Activated CD4-positive, alpha-beta memory T cell treated with anti-CD3 and anti-CD28 coated beads for 36 hours (primary cell): ENCODE measurements at regions of chr12 and their contacts with region 1.

Region 1: DNA sequence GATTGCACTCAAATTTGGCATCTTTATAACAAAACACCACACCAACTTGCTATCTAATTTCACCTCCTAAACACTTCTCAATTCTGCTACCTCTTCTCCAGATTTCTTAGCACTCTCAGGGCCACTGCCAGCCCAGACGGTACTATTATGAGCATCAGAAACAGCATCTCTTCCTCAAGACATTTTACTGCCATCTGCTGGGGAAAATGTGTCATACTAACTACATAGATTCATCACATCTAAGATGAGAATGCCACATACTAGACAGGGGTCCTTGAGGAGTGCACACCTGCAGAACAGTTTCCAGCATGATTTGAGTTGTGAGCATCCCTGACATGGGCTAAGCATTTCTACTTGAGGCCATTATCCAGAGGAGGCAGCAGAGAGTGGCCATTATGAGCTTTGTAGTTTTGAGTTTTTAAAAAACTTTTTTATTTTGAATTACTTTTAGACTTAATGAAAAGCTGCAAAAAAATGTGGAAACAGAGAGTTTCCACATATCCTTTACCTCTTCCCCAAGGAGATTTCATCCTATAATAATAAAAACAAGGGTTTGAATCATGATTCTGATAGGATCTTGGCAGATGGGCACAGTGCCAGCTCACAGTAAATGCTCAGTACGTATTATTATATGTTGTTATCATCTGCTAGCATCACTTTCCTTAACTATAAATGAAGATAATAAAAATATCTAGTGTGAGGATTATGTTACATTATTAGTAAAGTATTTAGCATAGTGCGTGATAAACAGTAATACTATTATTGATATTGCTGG is 15.2 kb upstream of the GRIP1 start:
- DNase-seq: peak; percentile 17
- H3K4me3 Mint-ChIP-seq: no peak overlapping the region
- H3K27ac Mint-ChIP-seq: no peak overlapping the region
- H3K4me1 Mint-ChIP-seq: peaks cover 4% of the 10 kb centered on the region
- H3K27me3 Mint-ChIP-seq: peaks cover 5% of the 10 kb centered on the region

Region 2: DNA sequence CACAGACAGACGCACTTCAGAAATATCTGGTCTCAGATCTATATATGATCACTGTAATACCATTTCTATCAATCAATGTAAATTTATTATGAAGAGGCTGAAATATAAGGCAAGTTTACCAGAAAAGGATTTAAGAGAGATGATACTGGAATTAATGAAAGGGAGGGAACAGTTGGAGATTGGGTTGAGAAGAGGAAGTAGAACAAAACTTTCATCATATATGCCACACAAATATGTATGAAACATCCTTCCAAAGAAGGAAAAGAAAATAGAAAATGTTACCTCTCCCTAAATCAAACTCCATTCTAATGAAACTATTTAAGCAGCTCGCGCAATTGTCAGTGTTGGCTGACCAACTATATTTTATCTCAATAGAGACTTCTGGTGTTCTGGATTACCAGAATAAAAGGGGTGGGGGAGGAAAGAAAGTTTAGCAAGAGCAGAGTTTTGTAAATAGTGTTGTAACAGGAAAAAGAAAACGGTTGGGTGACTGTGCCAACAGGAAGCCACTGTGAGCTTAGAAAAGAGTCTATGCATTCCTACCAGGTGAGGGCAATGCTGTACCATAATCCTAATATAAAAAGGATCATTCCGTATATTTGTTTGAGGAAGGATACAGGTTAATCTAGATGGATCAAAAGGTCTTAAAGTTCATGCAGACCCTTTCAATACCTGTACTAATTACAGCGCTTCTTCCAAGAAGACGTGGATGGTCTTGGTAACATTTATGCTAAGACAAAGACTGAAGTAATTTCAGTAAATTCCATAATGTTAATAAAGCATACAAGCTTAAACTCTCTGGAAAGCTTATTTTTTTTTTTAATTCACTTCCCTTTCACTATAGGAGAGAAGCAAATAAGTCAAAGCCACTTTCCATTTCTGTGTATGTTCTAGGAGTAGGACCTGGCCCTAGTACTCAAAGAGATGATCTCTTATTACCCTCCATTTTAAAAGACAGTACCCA is 549.0 kb before region 1 on chr12:
- CTCF ChIA-PET with region 1: interaction called, 3 read pairs
- POLR2A ChIA-PET with region 1: no interaction called
- intact Hi-C with region 1: loop called (anchors 10 kb)
- DNase-seq: no peak
- H3K4me3 Mint-ChIP-seq: no peak overlapping the region
- H3K27ac Mint-ChIP-seq: peak overlapping the region; percentile 49
- H3K4me1 Mint-ChIP-seq: peaks cover 9% of the 10 kb centered on the region
- H3K27me3 Mint-ChIP-seq: no peaks in the 10 kb centered on the region

Region 3: GRCh38 chr12:66269757-66270383 is 424.2 kb before region 1 on chr12:
- CTCF ChIA-PET with region 1: interaction called, 22 read pairs
- POLR2A ChIA-PET with region 1: no interaction called
- intact Hi-C with region 1: loop called (anchors 1 kb)
- DNase-seq: peak; percentile 30
- H3K4me3 Mint-ChIP-seq: no peak overlapping the region
- H3K27ac Mint-ChIP-seq: no peak overlapping the region
- H3K4me1 Mint-ChIP-seq: peaks cover 4% of the 10 kb centered on the region
- H3K27me3 Mint-ChIP-seq: no peaks in the 10 kb centered on the region

Region 4: DNA sequence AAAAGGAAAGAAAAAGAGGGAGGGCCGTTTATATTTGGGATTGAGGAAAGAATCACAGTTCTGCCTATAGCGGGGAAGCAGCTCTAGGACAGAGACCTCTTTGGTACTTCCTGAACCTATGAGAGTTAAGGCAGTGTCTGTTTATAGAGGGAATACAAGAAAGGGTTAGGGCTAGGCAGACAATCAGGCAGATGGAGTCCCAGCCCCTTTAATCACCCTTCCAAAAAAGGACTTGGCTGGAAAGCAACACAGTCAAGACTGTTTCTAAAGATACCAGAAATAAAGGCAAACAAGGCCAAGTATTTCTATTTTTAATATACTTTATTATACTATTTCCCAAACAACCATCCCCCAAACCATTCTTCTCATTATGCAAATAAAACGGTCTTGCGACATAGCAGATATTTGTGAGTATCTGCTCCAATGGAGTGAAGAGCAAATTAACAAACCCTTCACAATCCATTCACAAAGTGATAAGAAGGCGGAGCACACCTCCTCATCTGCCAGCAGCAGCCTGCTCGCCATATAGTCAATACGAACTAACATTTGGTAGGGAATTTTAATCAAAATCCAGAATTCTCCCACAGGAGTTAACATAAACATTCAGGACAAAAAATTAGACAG is 14.5 kb before region 1 on chr12:
- CTCF ChIA-PET with region 1: interaction called, 31 read pairs
- POLR2A ChIA-PET with region 1: no interaction called
- intact Hi-C with region 1: no loop called
- DNase-seq: no peak
- H3K4me3 Mint-ChIP-seq: no peak overlapping the region
- H3K27ac Mint-ChIP-seq: no peak overlapping the region
- H3K4me1 Mint-ChIP-seq: no peaks in the 10 kb centered on the region
- H3K27me3 Mint-ChIP-seq: peaks cover 7% of the 10 kb centered on the region

Region 5: DNA sequence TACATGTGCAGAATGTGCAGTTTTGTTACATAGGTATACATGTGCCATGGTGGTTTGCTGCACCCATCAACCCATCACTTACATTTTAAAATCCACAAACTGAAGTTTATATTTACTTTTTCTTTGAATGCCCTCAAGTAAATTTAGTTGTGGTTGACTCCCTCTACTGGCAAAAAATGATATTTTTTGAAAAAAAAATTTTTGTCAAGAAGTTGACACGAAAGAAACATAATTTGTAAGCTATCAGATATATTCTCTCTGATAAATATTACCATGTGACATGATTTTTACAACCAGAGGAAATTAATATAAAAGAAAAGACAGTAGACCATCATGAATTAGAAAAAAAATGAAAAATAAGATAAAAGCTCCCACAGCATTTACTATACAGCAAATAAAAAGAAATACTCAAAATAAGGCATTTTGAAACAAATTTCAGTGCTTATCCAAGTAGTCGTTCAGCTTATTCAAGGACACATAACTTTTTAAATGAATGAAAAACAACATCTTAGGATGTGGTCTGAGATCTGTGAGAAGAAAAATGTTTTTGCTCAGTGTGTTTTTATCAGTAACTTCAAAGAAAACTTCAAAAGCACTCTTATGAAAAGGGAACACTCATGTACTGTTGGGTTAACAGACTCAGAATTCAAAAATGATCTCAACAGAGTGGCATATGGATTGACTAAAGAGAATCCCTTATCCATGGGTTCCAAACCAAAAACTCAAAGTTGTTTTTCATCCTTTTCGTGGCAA is 14.8 kb after region 1 on chr12:
- CTCF ChIA-PET with region 1: interaction called, 14 read pairs
- POLR2A ChIA-PET with region 1: no interaction called
- intact Hi-C with region 1: no loop called
- DNase-seq: no peak
- H3K4me3 Mint-ChIP-seq: no peak overlapping the region
- H3K27ac Mint-ChIP-seq: no peak overlapping the region
- H3K4me1 Mint-ChIP-seq: peaks cover 16% of the 10 kb centered on the region
- H3K27me3 Mint-ChIP-seq: peaks cover 2% of the 10 kb centered on the region

Region 6: GRCh38 chr12:66860752-66861750 is 167.0 kb after region 1 on chr12:
- CTCF ChIA-PET with region 1: interaction called, 16 read pairs
- POLR2A ChIA-PET with region 1: no interaction called
- intact Hi-C with region 1: loop called (anchors 1 kb)
- DNase-seq: peak; percentile 73
- H3K4me3 Mint-ChIP-seq: no peak overlapping the region
- H3K27ac Mint-ChIP-seq: no peak overlapping the region
- H3K4me1 Mint-ChIP-seq: no peaks in the 10 kb centered on the region
- H3K27me3 Mint-ChIP-seq: peaks cover 3% of the 10 kb centered on the region